ENCODE measurements at regions of chr4 and their contacts with region 1.

Region 1: GRCh38 chr4:152500800-152501434 is 35.0 kb downstream of the FBXW7 start:
- DNase-seq: peak; percentile 30
- H3K4me3 Mint-ChIP-seq: no peak overlapping the region
- H3K27ac Mint-ChIP-seq: no peak overlapping the region
- H3K4me1 Mint-ChIP-seq: peaks cover 21% of the 10 kb centered on the region
- H3K27me3 Mint-ChIP-seq: no peaks in the 10 kb centered on the region

Region 2: DNA sequence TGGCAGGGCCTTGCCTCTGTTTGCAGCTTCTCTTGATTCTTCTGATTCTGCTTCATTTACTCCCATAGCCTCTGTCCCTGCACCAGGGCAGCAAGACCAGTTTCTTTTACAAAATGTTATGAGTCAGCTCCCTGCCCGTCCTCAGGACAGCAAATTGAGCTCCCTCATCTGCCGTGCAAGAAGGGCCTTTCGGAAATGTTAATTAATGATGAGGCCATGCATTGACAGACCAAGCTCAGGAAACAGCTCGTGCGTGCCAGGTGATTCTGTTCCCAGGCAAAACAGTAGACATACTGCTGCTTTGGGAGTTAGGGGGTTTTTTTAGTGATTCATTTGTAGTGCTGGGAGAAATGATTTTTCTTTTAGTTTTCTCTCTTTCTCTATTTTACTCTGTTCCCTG is 196.7 kb before region 1 on chr4:
- intact Hi-C with region 1: no loop called
- DNase-seq: no peak
- H3K4me3 Mint-ChIP-seq: no peak overlapping the region
- H3K27ac Mint-ChIP-seq: no peak overlapping the region
- H3K4me1 Mint-ChIP-seq: no peaks in the 10 kb centered on the region
- H3K27me3 Mint-ChIP-seq: peaks cover 2% of the 10 kb centered on the region

Region 3: DNA sequence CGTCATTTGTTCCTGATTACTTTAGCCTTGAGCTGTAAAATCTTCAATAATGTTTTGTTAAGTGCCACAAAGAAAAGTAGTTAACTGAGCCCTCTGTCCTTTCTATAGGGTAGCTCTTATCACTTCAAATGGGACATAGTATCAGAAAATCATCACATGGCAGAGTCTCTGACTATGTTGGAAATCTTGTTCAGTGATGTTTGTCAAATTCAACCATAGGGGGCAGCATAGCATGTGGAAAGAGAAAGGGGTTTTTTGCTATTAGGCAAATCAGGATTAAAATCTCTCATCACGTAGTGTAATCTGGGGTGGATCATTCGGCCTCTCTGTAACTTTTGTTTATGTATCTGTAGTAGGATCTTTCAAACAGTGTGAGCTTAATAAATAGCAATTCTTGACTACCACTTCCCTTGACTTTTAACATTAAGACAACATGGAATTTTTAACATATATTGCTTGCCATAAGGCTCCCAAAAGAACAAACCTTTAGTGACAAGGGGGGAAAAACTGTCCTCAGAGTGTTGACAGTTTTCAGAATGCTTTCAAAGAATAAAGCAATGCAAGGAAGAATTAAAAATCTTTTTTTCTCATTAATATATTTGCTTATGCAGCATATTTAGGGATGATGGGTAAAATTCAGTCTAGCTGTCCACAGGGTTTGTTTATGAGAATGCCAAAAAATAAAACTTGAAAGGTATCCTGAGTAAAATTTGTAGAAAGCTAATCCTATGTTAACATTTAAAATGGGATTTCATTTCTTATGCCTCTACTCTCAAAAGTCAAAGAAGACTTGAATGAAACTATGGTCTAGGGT is 92.2 kb before region 1 on chr4:
- intact Hi-C with region 1: loop called (anchors 1 kb)
- DNase-seq: no peak
- H3K4me3 Mint-ChIP-seq: no peak overlapping the region
- H3K27ac Mint-ChIP-seq: no peak overlapping the region
- H3K4me1 Mint-ChIP-seq: peaks cover 9% of the 10 kb centered on the region
- H3K27me3 Mint-ChIP-seq: no peaks in the 10 kb centered on the region

Region 4: GRCh38 chr4:152454398-152455011 is 46.4 kb before region 1 on chr4:
- intact Hi-C with region 1: loop called (anchors 2 kb)
- DNase-seq: no peak
- H3K4me3 Mint-ChIP-seq: no peak overlapping the region
- H3K27ac Mint-ChIP-seq: no peak overlapping the region
- H3K4me1 Mint-ChIP-seq: peaks cover 27% of the 10 kb centered on the region
- H3K27me3 Mint-ChIP-seq: no peaks in the 10 kb centered on the region

Region 5: DNA sequence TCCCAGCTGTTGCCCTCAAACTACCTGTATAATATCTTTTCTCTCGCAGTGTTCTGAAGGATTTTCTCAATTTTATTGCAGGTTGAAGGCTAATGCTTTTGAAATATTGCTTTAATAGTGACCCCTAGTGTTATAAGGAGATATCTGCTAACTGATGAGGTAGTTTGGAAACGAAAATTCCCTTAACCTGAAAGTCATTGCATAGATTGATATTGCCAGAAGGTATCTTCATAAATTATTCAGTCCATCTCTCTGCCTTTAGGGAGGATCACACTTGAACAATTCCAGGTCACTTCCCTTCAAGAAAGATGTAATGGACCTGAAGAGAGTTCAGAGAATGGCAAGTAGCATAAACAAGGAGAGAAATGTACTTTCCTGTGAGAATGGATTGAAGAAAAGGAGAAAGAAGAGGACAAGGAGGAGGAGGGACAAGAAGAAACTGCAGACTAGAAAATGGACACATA is 234.5 kb after region 1 on chr4:
- intact Hi-C with region 1: loop called (anchors 1 kb)
- DNase-seq: no peak
- H3K4me3 Mint-ChIP-seq: no peak overlapping the region
- H3K27ac Mint-ChIP-seq: no peak overlapping the region
- H3K4me1 Mint-ChIP-seq: peaks cover 4% of the 10 kb centered on the region
- H3K27me3 Mint-ChIP-seq: peaks cover 8% of the 10 kb centered on the region